Heart left ventricle (tissue), 16 donors: ENCODE measurements at regions of chr22 and their contacts with region 1.

Region 1: GRCh38 chr22:19523240-19524169 is 705 bp downstream of the CLDN5 start:
- DNase-seq: no peak
- ATAC-seq: peak in 1 of 4 donors; percentile 29
- H3K4me3 ChIP-seq: peak overlapping the region; percentile 36 to 80 (median 62)
- H3K27ac ChIP-seq: peak overlapping the region; percentile 71 to 97 (median 88)
- H3K4me1 ChIP-seq: peaks cover 5 to 64% (median 32%) of the 10 kb centered on the region in 12 donors
- H3K27me3 ChIP-seq: peaks cover 9 to 35% (median 20%) of the 10 kb centered on the region in 9 donors
- CTCF ChIP-seq: no peak
- POLR2A ChIP-seq: no peak

Region 2: GRCh38 chr22:19554834-19555404 is 31.4 kb after region 1 on chr22:
- intact Hi-C with region 1: no loop called
- DNase-seq: no peak
- ATAC-seq: no peak
- H3K4me3 ChIP-seq: no peak overlapping the region
- H3K27ac ChIP-seq: no peak overlapping the region
- H3K4me1 ChIP-seq: no peaks in the 10 kb centered on the region
- H3K27me3 ChIP-seq: no peaks in the 10 kb centered on the region
- CTCF ChIP-seq: no peak
- POLR2A ChIP-seq: no peak

Region 3: GRCh38 chr22:19568337-19569275 is 45.1 kb after region 1 on chr22:
- intact Hi-C with region 1: loop called in 7 of 10 experiments (anchors 2 to 5 kb)
- DNase-seq: peak in 1 of 5 donors; percentile 56
- ATAC-seq: peak in 2 of 4 donors; percentile 51 to 60
- H3K4me3 ChIP-seq: no peak overlapping the region
- H3K27ac ChIP-seq: peak overlapping the region in 6 of 12 donors; percentile 27 to 79 (median 72)
- H3K4me1 ChIP-seq: peaks cover 0 to 52% (median 20%) of the 10 kb centered on the region in 12 donors
- H3K27me3 ChIP-seq: no peaks in the 10 kb centered on the region
- CTCF ChIP-seq: no peak
- POLR2A ChIP-seq: no peak

Region 4: GRCh38 chr22:19576460-19577421 is 53.2 kb after region 1 on chr22:
- intact Hi-C with region 1: loop called in 4 of 10 experiments (anchors 2 to 5 kb)
- DNase-seq: peak in 4 of 5 donors; percentile 44 to 70 (median 52)
- ATAC-seq: peak; percentile 76 to 83 (median 80)
- H3K4me3 ChIP-seq: no peak overlapping the region
- H3K27ac ChIP-seq: peak overlapping the region; percentile 37 to 78 (median 62)
- H3K4me1 ChIP-seq: peaks cover 0 to 47% (median 24%) of the 10 kb centered on the region in 12 donors
- H3K27me3 ChIP-seq: peaks cover 0 to 2% (median 0%) of the 10 kb centered on the region in 9 donors
- CTCF ChIP-seq: no peak
- POLR2A ChIP-seq: no peak